Activated CD4-positive, alpha-beta T cell treated with anti-CD3 and anti-CD28 coated beads for 36 hours (primary cell): ENCODE measurements at regions of chr3 and their contacts with region 1.

Region 1: GRCh38 chr3:14402304-14402811 is at the start of gene SLC6A6:
- DNase-seq: peak; percentile 97
- ATAC-seq: peak; percentile 80
- H3K4me3 Mint-ChIP-seq: peak within 1 kb of the TSS; percentile 94
- H3K27ac Mint-ChIP-seq: peak within 1 kb of the TSS; percentile 95
- H3K4me1 Mint-ChIP-seq: peaks cover 43% of the 10 kb centered on the region
- H3K27me3 Mint-ChIP-seq: no peaks in the 10 kb centered on the region
- total RNA-seq, gene SLC6A6: 51.7 to 54.2 TPM

Region 2: DNA sequence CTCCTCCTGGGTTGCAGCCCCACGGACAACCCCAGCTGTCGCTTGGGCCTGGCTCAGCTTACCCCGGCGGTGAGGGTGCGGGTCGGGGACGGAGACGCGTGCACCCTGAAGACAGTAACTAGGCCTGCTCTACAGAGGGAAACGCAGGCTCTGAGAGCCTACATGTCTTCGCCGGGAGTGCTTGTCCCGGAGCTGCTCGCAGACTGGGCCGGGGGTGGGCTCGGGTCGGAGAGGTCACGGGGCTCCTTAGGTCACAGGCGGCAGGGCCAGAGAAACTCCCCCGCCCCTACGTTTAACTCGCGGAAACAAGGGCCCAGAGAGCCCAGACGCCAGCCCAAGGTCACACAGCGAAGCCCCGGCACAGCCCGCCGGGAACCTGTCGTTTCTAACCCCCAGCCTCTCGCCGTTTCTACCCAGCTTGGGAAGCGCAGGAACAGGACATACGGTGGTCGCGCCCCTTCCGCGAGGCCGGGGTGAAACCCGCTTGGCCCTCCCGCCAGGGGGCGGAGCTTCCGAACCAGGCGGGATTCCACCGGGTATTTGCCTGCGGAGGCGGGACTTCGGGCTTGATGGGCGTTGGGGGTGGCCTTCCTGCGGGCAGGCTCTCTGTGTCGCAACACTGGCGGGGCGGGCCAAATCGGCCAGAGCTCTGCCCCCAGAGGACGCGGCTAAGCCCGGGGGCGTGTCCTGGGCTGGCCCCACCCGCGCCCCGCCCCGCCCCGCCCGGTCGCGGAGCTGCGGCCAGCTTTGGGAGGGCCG is 922.6 kb before region 1 on chr3 and contains the start of gene HDAC11:
- CTCF ChIA-PET with region 1: no interaction called
- POLR2A ChIA-PET with region 1: no interaction called
- intact Hi-C with region 1: loop called in 1 of 2 experiments (anchors 10 kb)
- DNase-seq: peak; percentile 99
- ATAC-seq: peak; percentile 96
- H3K4me3 Mint-ChIP-seq: peak within 1 kb of the TSS; percentile 89
- H3K27ac Mint-ChIP-seq: peak within 1 kb of the TSS; percentile 90
- H3K4me1 Mint-ChIP-seq: peaks cover 20% of the 10 kb centered on the region
- H3K27me3 Mint-ChIP-seq: no peaks in the 10 kb centered on the region
- total RNA-seq, gene HDAC11: 3.4 to 4.1 TPM

Region 3: DNA sequence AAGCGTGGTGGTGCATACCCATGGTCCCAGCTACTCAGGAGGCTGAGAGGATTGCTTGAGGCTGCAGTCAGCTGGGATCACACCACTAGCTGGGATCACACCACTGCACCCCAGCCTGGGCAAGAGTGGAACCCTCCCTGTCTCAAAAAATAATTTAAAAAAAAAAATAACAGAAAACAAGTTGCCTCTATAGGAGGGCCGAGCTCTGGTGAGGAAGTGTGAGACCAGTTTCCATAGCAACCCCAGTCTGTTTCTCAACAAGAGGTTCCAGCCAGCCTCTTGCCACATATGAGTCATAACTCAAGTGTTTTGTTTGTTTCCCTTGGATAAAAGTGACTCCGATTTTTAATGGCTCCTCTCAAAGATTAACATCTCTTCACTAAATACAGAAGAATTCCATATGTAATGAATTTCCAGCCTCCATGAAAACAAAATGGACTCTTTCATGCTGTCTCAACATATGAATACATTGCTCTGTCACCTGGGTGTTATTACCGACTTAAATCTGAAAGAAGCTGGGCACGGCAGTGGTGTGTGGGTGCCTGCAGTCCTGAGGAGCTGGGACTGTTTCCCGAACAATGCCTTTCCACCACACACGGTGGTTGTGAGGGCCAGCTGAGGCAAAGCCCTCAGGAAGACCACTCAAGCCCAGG is 257.8 kb before region 1 on chr3:
- CTCF ChIA-PET with region 1: no interaction called
- POLR2A ChIA-PET with region 1: no interaction called
- intact Hi-C with region 1: loop called in 1 of 2 experiments (anchors 10 kb)
- DNase-seq: peak; percentile 71
- ATAC-seq: peak; percentile 85
- H3K4me3 Mint-ChIP-seq: no peak overlapping the region
- H3K27ac Mint-ChIP-seq: peak overlapping the region; percentile 86
- H3K4me1 Mint-ChIP-seq: peaks cover 56% of the 10 kb centered on the region
- H3K27me3 Mint-ChIP-seq: no peaks in the 10 kb centered on the region

Region 4: DNA sequence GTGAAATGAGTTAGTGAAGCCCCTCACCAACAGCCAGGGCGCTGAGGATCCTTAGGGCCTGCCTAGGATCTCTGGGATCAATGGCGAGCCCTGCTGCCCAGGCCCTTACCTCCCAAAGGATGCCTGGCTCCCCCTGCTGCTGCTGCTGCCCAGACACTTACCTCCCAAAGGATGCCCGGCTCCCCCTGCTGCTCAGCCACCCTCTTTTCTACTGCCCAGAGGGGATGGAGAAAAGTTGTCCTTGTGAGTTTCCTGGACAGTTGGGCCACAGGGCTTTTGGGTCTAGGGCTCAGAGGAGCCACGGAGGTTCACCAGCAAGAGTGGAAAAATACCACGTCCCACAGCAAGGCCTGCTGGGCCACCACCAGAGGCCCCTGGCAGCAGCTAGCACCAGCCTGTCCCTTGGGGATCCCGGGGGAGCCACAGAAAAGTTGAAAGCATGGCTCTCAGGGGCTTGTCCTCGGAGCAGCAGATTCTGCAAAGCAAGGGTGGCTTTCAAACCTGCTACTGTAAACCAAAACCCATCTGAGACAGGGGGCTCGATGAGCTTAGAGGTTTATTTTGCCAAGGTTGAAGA is 59.5 kb after region 1 on chr3:
- CTCF ChIA-PET with region 1: interaction called, 8 read pairs
- POLR2A ChIA-PET with region 1: interaction called, 3 read pairs
- intact Hi-C with region 1: loop called in 1 of 2 experiments (anchors 1 kb)
- DNase-seq: peak; percentile 64
- ATAC-seq: peak; percentile 23
- H3K4me3 Mint-ChIP-seq: no peak overlapping the region
- H3K27ac Mint-ChIP-seq: peak overlapping the region; percentile 83
- H3K4me1 Mint-ChIP-seq: peaks cover 38% of the 10 kb centered on the region
- H3K27me3 Mint-ChIP-seq: no peaks in the 10 kb centered on the region

Region 5: GRCh38 chr3:14651440-14652251 is 249.3 kb after region 1 on chr3 and contains the start of gene CCDC174:
- CTCF ChIA-PET with region 1: no interaction called
- POLR2A ChIA-PET with region 1: no interaction called
- intact Hi-C with region 1: loop called in 1 of 2 experiments (anchors 1 kb)
- DNase-seq: peak; percentile 95
- ATAC-seq: peak; percentile 99
- H3K4me3 Mint-ChIP-seq: peak within 1 kb of the TSS; percentile 93
- H3K27ac Mint-ChIP-seq: peak within 1 kb of the TSS; percentile 96
- H3K4me1 Mint-ChIP-seq: peaks cover 40% of the 10 kb centered on the region
- H3K27me3 Mint-ChIP-seq: no peaks in the 10 kb centered on the region
- total RNA-seq, gene CCDC174: 16.2 to 18.2 TPM

Region 6: DNA sequence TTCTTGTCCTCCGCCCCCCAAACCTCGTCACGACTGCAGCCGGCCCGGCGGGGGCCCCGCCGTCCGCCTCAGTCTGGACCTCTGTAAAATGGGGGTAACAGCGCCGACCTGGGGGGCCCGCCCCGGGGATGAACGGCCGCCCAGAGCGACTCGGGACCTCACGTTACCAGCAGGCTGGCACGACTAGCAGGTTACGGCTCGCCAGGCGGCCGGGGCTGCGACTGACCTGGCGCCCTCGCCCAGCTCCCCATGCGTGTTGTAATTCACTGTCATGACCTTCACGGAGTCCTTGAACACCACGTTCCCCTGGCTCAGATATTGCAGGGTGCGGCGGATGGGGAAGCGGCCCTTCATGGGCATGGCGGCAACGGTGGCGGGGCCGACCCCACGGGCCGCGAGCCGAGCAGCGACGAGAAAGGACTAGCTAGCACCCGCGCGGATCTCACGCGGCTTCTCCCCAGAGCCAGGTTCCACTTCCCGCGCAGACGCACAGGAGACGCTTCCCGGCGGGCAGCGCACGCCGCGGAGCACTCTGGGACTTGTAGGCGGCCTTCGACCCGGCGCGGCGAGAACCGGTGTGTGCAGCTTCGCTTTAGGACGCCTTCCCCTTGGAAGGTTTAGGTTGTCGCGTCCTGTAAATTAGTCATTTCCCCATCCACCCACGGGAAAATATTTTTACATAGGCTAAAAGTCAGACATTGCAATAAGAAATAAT is 662.6 kb after region 1 on chr3 and contains the start of gene MRPS25:
- CTCF ChIA-PET with region 1: no interaction called
- POLR2A ChIA-PET with region 1: no interaction called
- intact Hi-C with region 1: loop called in 1 of 2 experiments (anchors 10 kb)
- DNase-seq: peak; percentile 95
- ATAC-seq: peak; percentile 98
- H3K4me3 Mint-ChIP-seq: peak within 1 kb of the TSS; percentile 96
- H3K27ac Mint-ChIP-seq: peak within 1 kb of the TSS; percentile 96
- H3K4me1 Mint-ChIP-seq: peaks cover 22% of the 10 kb centered on the region
- H3K27me3 Mint-ChIP-seq: no peaks in the 10 kb centered on the region
- total RNA-seq, gene MRPS25: 52.3 to 67.0 TPM